CD8-positive, alpha-beta T cell (primary cell): ENCODE measurements at regions of chr16 and their contacts with region 1.

Region 1: DNA sequence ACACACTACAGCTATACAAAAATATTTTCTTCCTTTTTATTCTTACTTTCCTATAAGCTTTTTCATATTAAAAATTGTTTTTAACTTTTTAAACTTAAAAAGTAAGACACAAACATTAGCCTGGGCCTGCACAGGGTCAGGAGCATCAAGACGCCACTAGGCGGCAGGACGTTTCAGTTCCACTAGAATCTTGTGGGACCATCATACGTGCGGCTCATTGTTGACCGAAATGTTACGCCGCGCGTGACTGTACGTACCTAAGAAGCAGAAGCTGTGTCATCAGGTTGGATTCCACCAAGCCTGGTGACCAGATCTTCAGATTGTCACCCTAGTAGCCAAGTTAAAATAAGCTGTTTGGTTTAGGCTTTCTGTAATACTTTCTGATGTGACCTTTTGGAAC is 47.1 kb downstream of the USP10 start:
- DNase-seq: no peak
- ATAC-seq: no peak
- H3K4me3 ChIP-seq: no peak overlapping the region
- H3K4me3 Mint-ChIP-seq: no peak overlapping the region
- H3K27ac ChIP-seq: no peak overlapping the region
- H3K27ac Mint-ChIP-seq: no peak overlapping the region
- H3K4me1 ChIP-seq: peaks cover 11% of the 10 kb centered on the region
- H3K4me1 Mint-ChIP-seq: peaks cover 33% of the 10 kb centered on the region
- H3K27me3 ChIP-seq: no peaks in the 10 kb centered on the region
- H3K27me3 Mint-ChIP-seq: no peaks in the 10 kb centered on the region
- CTCF ChIP-seq: no peak

Region 2: GRCh38 chr16:84785843-84786581 is 39.1 kb after region 1 on chr16:
- CTCF ChIA-PET with region 1: no interaction called
- POLR2A ChIA-PET with region 1: no interaction called
- intact Hi-C with region 1: loop called in 1 of 2 experiments (anchors 1 kb)
- DNase-seq: no peak
- ATAC-seq: no peak
- H3K4me3 ChIP-seq: no peak overlapping the region
- H3K4me3 Mint-ChIP-seq: no peak overlapping the region
- H3K27ac ChIP-seq: no peak overlapping the region
- H3K27ac Mint-ChIP-seq: no peak overlapping the region
- H3K4me1 ChIP-seq: no peaks in the 10 kb centered on the region
- H3K4me1 Mint-ChIP-seq: no peaks in the 10 kb centered on the region
- H3K27me3 ChIP-seq: no peaks in the 10 kb centered on the region
- H3K27me3 Mint-ChIP-seq: no peaks in the 10 kb centered on the region
- CTCF ChIP-seq: no peak